PC-9 (cell line): ENCODE measurements at regions of chr5 and their contacts with region 1.

Region 1: GRCh38 chr5:13427871-13428725 is 516.4 kb downstream of the DNAH5 start:
- DNase-seq: peak in 1 of 2 experiments; percentile 9
- H3K4me3 ChIP-seq: no peak overlapping the region
- H3K27ac ChIP-seq: no peak overlapping the region
- H3K4me1 ChIP-seq: no peaks in the 10 kb centered on the region
- H3K27me3 ChIP-seq: no peaks in the 10 kb centered on the region
- CTCF ChIP-seq: no peak

Region 2: DNA sequence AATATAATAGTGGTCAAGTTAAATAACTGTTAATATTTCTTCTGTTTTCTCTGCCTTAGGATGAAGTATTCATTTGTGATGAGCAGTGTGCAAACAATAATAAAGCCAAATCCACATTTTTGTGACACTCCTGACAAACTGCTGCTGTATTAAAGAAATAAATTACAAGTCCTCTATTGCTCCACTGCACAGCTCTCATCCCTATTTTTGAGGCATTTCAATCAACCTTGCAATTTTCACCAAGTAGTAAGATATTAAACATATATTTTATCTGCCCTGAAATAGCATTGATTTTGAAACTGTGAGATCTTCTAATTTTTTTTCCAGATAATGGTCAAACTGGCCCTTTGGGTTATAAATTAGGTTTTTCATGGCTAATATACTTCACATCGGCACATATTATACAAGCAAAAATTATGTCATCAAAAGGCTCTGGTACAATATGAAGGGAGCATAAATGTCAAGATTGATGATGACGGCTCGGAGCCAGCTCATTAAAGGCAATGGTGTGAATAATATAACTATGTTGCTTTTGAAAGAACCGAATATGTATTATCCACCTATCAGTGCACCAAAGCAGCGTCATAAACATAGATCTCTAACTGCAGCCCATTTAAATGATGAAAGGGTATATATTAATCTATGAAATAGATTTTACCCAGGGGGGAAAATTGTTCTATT is 248.6 kb before region 1 on chr5:
- CTCF ChIA-PET with region 1: interaction called, 15 read pairs
- POLR2A ChIA-PET with region 1: no interaction called
- intact Hi-C with region 1: no loop called
- DNase-seq: no peak
- H3K4me3 ChIP-seq: no peak overlapping the region
- H3K27ac ChIP-seq: no peak overlapping the region
- H3K4me1 ChIP-seq: no peaks in the 10 kb centered on the region
- H3K27me3 ChIP-seq: no peaks in the 10 kb centered on the region
- CTCF ChIP-seq: no peak